Activated naive CD8-positive, alpha-beta T cell treated with anti-CD3 and anti-CD28 coated beads, Interleukin-2, amount 10 ng/mL, durations not matched to agents 7 days and 5 days (primary cell): ENCODE measurements at regions of chr14 and their contacts with region 1.

Region 1: DNA sequence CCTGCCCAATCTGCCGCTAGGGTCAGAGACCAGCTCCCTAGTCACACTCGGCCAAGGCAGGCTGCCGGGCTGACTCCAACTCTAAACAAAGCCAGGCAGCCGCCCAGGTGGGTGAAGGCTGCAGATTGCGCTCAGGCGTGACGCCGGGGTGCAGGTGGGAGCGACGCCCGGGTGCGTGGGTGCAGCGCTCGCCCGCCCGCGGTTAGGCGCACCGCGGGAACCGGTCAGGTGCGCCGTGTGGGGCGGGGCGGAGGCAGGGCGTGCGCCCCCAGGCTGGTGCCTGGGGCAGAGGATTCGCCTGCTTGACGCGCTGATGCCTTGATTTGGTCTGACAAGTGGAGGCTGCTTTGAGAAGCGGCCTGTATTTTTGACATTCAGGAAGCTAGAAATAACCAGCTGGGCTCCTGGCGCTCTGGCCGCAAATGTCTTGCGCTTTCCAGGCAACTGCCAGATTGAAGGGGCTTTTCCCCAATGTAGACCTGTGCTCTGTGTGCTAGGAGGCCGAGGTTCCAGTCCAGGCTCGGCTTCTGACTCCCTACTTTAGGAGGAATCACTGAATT is 126.7 kb upstream of the HIF1A start:
- DNase-seq: peak; percentile 80
- ATAC-seq: peak; percentile 73
- H3K4me3 Mint-ChIP-seq: peak overlapping the region; percentile 79
- H3K27ac Mint-ChIP-seq: peak overlapping the region; percentile 87
- H3K4me1 Mint-ChIP-seq: peaks cover 45% of the 10 kb centered on the region
- H3K27me3 Mint-ChIP-seq: peaks cover 1% of the 10 kb centered on the region

Region 2: DNA sequence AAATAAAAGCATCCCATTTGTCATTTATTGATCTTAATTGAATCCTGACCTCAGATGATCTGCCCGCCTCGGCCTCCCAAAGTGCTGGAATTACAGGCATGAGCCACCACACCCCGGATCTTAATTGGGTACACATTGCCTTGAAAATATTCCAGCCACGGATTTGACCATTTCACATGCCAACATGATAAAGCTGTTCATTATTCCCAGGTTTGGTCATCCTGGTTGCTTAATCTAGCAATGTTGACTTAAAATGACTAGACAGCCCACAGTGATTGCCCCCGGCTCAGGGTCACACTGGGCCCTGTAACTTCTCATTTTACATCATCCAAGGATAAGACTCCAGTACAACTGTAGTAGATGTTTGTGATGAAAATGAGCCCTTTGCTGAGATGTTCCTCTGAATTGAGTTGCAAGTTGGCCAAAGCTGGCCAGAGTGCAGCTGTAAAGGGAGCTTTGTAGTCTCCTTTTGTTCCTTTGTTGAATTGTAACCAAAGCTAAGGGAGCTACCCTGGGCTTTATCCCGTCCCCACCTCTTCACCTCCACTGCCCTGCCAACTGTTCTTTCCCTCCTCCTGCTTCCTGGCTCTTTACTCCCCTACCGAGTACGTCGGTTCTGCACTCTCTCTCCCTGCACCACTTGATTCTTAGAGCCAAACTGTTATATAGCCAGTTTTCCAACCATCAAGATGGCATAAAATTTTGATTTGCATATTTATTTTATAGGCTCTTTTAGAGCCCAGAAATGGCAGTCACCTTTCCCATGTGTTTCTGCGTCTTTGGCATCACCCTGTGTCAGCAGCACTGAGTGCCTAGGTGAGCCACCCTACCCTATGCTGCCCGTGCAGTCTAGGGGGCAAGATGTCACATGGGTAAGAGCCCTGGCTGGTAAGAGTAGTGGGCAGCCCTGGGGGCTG is 14.7 kb before region 1 on chr14:
- POLR2A ChIA-PET with region 1: interaction called, 10 read pairs
- DNase-seq: no peak
- ATAC-seq: no peak
- H3K4me3 Mint-ChIP-seq: peak overlapping the region; percentile 44
- H3K27ac Mint-ChIP-seq: peak overlapping the region; percentile 95
- H3K4me1 Mint-ChIP-seq: peaks cover 61% of the 10 kb centered on the region
- H3K27me3 Mint-ChIP-seq: no peaks in the 10 kb centered on the region

Region 3: GRCh38 chr14:61750708-61751474 is 182.2 kb after region 1 on chr14:
- POLR2A ChIA-PET with region 1: no interaction called
- DNase-seq: peak; percentile 88
- ATAC-seq: peak; percentile 97
- H3K4me3 Mint-ChIP-seq: peak overlapping the region; percentile 99
- H3K27ac Mint-ChIP-seq: peak overlapping the region; percentile 91
- H3K4me1 Mint-ChIP-seq: peaks cover 44% of the 10 kb centered on the region
- H3K27me3 Mint-ChIP-seq: peaks cover 9% of the 10 kb centered on the region